ENCODE measurements at regions of chr22 and their contacts with region 1.

Region 1: DNA sequence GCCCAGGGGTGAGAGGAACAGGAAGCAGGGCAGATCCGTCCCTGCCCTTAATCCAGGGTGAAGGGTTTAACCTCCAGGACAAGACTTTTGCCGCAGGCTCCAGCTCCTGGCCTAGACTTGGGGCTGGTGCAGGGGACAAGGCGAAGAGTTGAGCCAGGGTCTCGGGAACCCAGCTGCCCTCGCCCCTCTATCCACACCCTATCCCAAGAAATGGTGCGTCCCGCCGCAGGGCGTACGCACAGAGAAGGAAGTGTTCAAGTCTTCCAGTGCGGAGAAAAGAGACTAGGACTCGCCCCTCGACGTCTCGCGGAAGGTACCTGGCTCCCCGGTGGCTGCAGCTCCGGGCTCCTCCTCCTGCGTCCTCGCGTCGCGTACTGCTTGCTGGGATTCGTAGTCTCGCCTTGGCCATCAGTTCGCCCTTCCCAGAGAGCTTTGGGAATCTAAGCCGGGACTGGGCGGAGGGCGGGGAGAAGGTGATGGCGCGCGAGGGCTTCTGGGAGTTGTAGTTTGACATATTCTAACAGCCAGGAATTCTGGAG is at the start of gene ZMAT5:
- DNase-seq: peak; percentile 98
- H3K4me3 Mint-ChIP-seq: peak within 1 kb of the TSS; percentile 94
- H3K27ac Mint-ChIP-seq: peak within 1 kb of the TSS; percentile 95
- H3K4me1 Mint-ChIP-seq: peaks cover 22% of the 10 kb centered on the region
- H3K27me3 Mint-ChIP-seq: no peaks in the 10 kb centered on the region
- total RNA-seq, gene ZMAT5: 24.9 and 26.1 TPM in 2 replicates

Region 2: GRCh38 chr22:29603358-29604075 is 163.2 kb before region 1 on chr22 and contains the start of gene NF2:
- intact Hi-C with region 1: loop called (anchors 5 kb)
- DNase-seq: peak; percentile 100
- H3K4me3 Mint-ChIP-seq: peak within 1 kb of the TSS; percentile 91
- H3K27ac Mint-ChIP-seq: peak within 1 kb of the TSS; percentile 98
- H3K4me1 Mint-ChIP-seq: peaks cover 14% of the 10 kb centered on the region
- H3K27me3 Mint-ChIP-seq: no peaks in the 10 kb centered on the region
- total RNA-seq, gene NF2: 59.1 and 61.9 TPM in 2 replicates

Region 3: DNA sequence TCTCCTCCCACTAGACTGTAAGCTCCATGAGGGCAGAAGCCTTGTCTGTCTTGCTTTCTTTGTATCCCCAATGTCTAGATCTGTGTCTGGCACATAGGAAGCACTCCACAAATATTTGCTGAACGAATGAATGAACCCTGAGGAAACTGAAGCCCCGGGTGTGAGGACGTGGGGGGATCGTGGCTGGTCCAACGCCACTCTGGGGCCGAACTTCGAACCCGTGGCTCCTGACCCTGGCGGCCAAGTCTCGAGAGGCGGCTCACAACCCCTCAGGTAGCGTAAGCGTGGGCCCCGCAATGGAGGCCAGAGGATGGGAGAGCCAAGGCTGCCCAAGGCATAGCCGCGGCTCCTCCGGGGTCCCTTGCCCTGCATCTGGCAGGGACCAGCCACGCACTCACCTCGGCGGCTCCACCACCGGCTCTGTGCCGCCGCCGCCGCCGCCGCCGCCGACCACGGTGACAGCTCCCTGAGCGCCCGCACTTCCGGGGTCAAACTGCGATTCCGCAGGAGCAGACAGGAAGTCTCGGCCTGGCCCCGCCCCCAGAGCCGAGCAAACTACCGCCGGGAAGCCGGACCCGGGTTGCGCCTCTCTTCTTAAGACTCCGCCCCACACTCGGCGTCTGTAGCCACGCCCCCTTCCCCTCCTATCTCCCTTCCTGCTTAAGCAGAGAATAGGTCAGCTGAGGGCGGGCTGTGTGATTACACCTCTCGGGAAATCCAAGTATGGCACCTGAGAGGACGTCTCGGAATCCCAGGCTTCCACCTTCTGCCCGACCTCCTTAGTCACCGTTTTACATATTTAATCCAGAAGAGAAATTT is 71.3 kb after region 1 on chr22 and contains the start of gene ASCC2:
- intact Hi-C with region 1: loop called (anchors 1 kb)
- DNase-seq: peak; percentile 100
- H3K4me3 Mint-ChIP-seq: peak within 1 kb of the TSS; percentile 99
- H3K27ac Mint-ChIP-seq: peak within 1 kb of the TSS; percentile 90
- H3K4me1 Mint-ChIP-seq: peaks cover 31% of the 10 kb centered on the region
- H3K27me3 Mint-ChIP-seq: no peaks in the 10 kb centered on the region
- total RNA-seq, gene ASCC2: 78.5 and 81.3 TPM in 2 replicates

Region 4: DNA sequence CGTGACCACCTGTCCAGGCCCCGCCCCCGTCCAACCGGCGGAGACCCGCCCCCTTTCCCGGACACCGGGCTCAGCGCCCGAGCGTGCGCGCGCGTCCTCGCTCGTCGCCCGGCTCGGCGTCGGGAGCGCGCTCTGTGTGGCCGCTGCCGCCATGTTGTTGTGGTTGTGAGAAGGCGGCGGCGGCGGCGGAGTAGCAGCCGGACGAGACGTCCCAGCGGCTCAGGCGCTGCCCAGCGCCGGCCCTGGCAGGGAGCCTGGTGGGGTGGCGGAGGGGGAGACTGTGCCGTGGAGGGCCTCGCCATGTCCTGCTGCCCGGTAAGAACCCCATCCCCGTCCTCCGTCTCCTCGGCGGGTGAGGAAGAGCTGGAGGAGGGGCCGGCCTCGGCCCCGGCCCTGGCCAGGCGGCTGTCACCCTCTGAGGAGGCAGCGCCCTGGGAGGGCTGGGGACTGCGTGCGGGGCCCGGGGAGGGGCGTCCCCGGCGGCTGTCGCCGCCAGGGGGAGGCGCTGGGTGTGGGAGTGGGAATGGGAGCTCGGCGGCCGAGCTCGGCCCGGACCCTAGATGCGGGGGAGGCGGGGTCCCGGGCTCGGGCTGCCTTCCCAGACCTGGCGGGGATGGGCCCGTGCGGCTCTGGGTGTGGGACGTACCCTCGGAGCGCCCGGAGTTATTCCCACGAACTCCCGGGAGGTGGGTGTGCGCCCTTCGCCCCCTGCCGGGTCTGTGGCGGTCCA is 116.5 kb after region 1 on chr22 and contains the start of gene MTMR3:
- intact Hi-C with region 1: loop called (anchors 2 kb)
- DNase-seq: peak; percentile 99
- H3K4me3 Mint-ChIP-seq: peak within 1 kb of the TSS; percentile 92
- H3K27ac Mint-ChIP-seq: peak within 1 kb of the TSS; percentile 83
- H3K4me1 Mint-ChIP-seq: peaks cover 10% of the 10 kb centered on the region
- H3K27me3 Mint-ChIP-seq: no peaks in the 10 kb centered on the region
- total RNA-seq, gene MTMR3: 21.0 and 23.9 TPM in 2 replicates

Region 5: GRCh38 chr22:30089655-30089974 is 322.9 kb after region 1 on chr22:
- intact Hi-C with region 1: loop called (anchors 5 kb)
- DNase-seq: no peak
- H3K4me3 Mint-ChIP-seq: no peak overlapping the region
- H3K27ac Mint-ChIP-seq: no peak overlapping the region
- H3K4me1 Mint-ChIP-seq: peaks cover 24% of the 10 kb centered on the region
- H3K27me3 Mint-ChIP-seq: no peaks in the 10 kb centered on the region

Region 6: GRCh38 chr22:30591588-30592359 is 825.1 kb after region 1 on chr22 and contains the start of gene PES1:
- intact Hi-C with region 1: loop called (anchors 2 kb)
- DNase-seq: peak; percentile 98
- H3K4me3 Mint-ChIP-seq: no peak within 1 kb of the TSS
- H3K27ac Mint-ChIP-seq: no peak within 1 kb of the TSS
- H3K4me1 Mint-ChIP-seq: no peaks in the 10 kb centered on the region
- H3K27me3 Mint-ChIP-seq: peaks cover 14% of the 10 kb centered on the region
- total RNA-seq, gene PES1: 170 and 173 TPM in 2 replicates

Region 7: DNA sequence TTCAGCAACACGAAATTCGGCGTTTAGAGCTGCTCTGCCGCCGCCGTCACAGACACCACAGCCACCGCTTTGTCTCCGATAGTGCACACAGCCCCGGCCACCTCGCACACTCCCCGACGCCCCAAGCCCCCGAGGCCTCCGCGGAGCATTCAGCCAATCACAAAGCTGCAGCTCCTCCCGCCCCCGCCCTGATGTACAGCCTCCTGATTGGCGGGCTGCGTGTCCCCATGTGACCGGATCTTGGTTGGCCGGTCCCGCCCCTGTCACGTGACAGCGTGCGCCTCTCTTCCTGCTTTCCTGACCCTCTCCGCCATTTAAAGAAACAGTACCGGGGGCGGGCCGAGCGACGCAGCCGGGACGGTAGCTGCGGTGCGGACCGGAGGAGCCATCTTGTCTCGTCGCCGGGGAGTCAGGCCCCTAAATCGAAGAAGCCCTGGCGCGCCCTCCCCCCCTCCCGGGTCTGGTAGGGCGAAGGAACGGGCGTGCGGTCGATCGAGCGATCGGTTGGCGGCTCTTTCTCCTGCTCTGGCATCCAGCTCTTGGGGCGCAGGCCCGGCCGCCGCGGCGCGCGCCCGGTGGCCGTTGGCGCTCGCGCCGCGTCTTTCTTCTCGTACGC is 1202.3 kb after region 1 on chr22 and contains the start of gene TUG1:
- intact Hi-C with region 1: loop called (anchors 2 kb)
- DNase-seq: peak; percentile 99
- H3K4me3 Mint-ChIP-seq: peak within 1 kb of the TSS; percentile 98
- H3K27ac Mint-ChIP-seq: peak within 1 kb of the TSS; percentile 99
- H3K4me1 Mint-ChIP-seq: peaks cover 39% of the 10 kb centered on the region
- H3K27me3 Mint-ChIP-seq: peaks cover 4% of the 10 kb centered on the region
- total RNA-seq, gene TUG1: 68.1 and 69.1 TPM in 2 replicates